ENCODE measurements at regions of chr5 and their contacts with region 1.

Region 1: DNA sequence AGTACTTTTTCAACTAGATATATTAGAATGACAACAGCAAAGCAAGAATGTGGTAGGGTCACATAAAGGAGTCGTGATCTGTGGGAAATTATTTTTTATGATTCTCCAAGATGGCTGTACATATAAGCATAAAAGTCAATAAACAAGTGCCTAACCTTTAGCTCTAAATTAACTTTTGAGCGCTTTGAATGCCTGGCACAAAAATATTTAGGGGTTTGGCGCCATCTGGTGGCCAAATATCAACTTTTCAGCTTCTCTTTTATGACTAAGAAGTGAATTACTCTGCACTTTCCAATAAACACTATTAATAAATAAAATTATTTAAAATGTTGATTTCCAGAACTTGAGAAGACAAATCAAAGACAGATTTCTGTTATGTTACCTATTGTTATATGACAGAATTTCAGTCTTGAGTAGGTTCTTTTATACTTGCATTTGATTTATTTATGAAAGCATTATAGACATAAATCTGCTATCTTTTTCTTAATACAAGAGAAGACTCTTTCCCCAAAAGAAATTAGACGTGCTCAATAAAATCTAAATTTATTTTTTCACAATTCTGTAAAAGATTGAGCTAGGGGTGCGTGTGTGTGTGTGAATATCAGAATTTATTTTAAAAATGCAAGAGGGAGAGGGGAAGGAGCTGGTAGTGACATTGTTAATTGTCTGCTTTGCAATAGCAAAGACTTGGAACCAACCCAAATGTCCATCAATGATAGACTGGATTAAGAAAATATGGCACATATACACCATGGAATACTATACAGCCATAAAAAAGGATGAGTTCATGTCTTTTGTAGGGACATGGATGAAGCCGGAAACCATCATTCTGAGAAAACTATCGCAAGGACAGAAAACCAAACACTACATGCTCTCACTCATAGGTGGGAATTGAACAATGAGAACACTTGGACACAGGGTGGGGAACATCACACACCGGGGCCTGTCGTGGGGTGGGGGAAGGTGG is 36.7 kb upstream of the ARRDC3 start:
- DNase-seq: peak; percentile 48
- ATAC-seq: peak; percentile 47; the same call in 1 of the 2 replicates
- H3K4me3 ChIP-seq: no peak overlapping the region
- H3K27ac ChIP-seq: no peak overlapping the region
- H3K4me1 ChIP-seq: no peaks in the 10 kb centered on the region; a peak in 1 of 4 replicates
- H3K27me3 ChIP-seq: no peaks in the 10 kb centered on the region
- CTCF ChIP-seq: peak; percentile 36 to 72 (median 63); a peak in 4 of 6 replicates
- POLR2A ChIP-seq: no peak
- RAD21 ChIP-seq: peak; percentile 85

Region 2: GRCh38 chr5:90802474-90803317 is 617.2 kb before region 1 on chr5:
- CTCF ChIA-PET with region 1: interaction called, 35 read pairs
- POLR2A ChIA-PET with region 1: no interaction called
- RAD21 ChIA-PET with region 1: interaction called in 1 of 2 experiments, 3 read pairs
- intact Hi-C with region 1: loop called (anchors 5 kb)
- DNase-seq: peak; percentile 27
- ATAC-seq: peak; percentile 90
- H3K4me3 ChIP-seq: no peak overlapping the region
- H3K27ac ChIP-seq: no peak overlapping the region
- H3K4me1 ChIP-seq: no peaks in the 10 kb centered on the region
- H3K27me3 ChIP-seq: no peaks in the 10 kb centered on the region
- CTCF ChIP-seq: peak; percentile 42 to 85 (median 68); a peak in 5 of 6 replicates
- POLR2A ChIP-seq: no peak
- RAD21 ChIP-seq: peak; percentile 54; the same call in 1 of the 2 replicates

Region 3: GRCh38 chr5:90866333-90866732 is 553.5 kb before region 1 on chr5:
- CTCF ChIA-PET with region 1: interaction called, 44 read pairs
- POLR2A ChIA-PET with region 1: no interaction called
- RAD21 ChIA-PET with region 1: interaction called, 4 read pairs
- intact Hi-C with region 1: loop called (anchors 2 kb)
- DNase-seq: peak; percentile 27
- ATAC-seq: peak; percentile 80
- H3K4me3 ChIP-seq: no peak overlapping the region
- H3K27ac ChIP-seq: no peak overlapping the region
- H3K4me1 ChIP-seq: no peaks in the 10 kb centered on the region
- H3K27me3 ChIP-seq: no peaks in the 10 kb centered on the region
- CTCF ChIP-seq: peak; percentile 29 to 66 (median 65); a peak in 4 of 6 replicates
- POLR2A ChIP-seq: no peak
- RAD21 ChIP-seq: peak; percentile 83

Region 4: DNA sequence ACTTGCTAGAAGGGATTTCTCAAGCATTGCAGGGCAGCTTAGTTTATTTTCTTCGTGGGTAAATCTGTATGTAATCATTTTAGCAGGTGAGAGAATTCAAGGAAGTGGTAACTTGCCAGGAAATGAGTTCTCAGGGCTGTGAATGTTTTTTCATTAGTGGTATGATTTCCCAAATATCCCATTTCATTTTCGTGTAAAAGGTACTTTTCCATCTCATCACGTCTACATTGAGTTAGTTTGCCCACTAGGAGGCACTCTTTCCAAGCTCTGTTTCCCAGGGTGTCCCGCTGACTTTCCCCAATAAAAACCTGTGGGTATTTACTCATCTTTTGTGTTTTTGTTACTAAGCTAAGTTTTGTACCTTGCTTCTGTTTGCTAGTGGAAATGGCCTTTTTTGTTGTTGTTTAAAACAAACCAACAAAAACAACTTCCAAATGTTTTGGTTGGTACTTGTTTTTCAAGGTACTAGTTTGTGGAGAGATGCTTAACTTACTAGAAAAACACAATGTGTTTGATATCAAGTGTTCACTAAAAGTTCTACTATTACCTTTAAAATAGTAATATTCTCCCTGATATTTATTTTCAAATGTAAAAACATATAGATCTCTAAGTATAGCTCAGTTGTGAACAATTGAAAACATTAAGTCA is 487.7 kb before region 1 on chr5:
- CTCF ChIA-PET with region 1: interaction called, 14 read pairs
- POLR2A ChIA-PET with region 1: no interaction called
- RAD21 ChIA-PET with region 1: no interaction called
- intact Hi-C with region 1: loop called (anchors 2 kb)
- DNase-seq: peak; percentile 44
- ATAC-seq: peak; percentile 67
- H3K4me3 ChIP-seq: no peak overlapping the region
- H3K27ac ChIP-seq: no peak overlapping the region
- H3K4me1 ChIP-seq: no peaks in the 10 kb centered on the region
- H3K27me3 ChIP-seq: no peaks in the 10 kb centered on the region
- CTCF ChIP-seq: peak; percentile 69 to 77 (median 74); a peak in 5 of 6 replicates
- POLR2A ChIP-seq: no peak
- RAD21 ChIP-seq: peak; percentile 84

Region 5: GRCh38 chr5:91101600-91102379 is 318.1 kb before region 1 on chr5:
- CTCF ChIA-PET with region 1: interaction called, 7 read pairs
- POLR2A ChIA-PET with region 1: no interaction called
- RAD21 ChIA-PET with region 1: no interaction called
- intact Hi-C with region 1: loop called (anchors 1 kb)
- DNase-seq: peak; percentile 76
- ATAC-seq: peak; percentile 100
- H3K4me3 ChIP-seq: no peak overlapping the region
- H3K27ac ChIP-seq: no peak overlapping the region
- H3K4me1 ChIP-seq: peaks cover 0 to 4% of the 10 kb centered on the region in 2 experiments; a peak in 1 of 4 replicates
- H3K27me3 ChIP-seq: no peaks in the 10 kb centered on the region
- CTCF ChIP-seq: peak; percentile 71 to 95 (median 84)
- POLR2A ChIP-seq: no peak
- RAD21 ChIP-seq: peak; percentile 97

Region 6: GRCh38 chr5:91219803-91220371 is 200.0 kb before region 1 on chr5:
- CTCF ChIA-PET with region 1: interaction called, 21 read pairs
- POLR2A ChIA-PET with region 1: no interaction called
- RAD21 ChIA-PET with region 1: interaction called in 1 of 2 experiments, 3 read pairs
- intact Hi-C with region 1: no loop called
- DNase-seq: peak; percentile 26
- ATAC-seq: peak; percentile 82
- H3K4me3 ChIP-seq: no peak overlapping the region
- H3K27ac ChIP-seq: no peak overlapping the region
- H3K4me1 ChIP-seq: no peaks in the 10 kb centered on the region
- H3K27me3 ChIP-seq: no peaks in the 10 kb centered on the region
- CTCF ChIP-seq: peak; percentile 50 to 64 (median 60); a peak in 5 of 6 replicates
- POLR2A ChIP-seq: no peak
- RAD21 ChIP-seq: peak; percentile 49

Region 7: GRCh38 chr5:91225848-91226686 is 193.8 kb before region 1 on chr5:
- CTCF ChIA-PET with region 1: interaction called, 14 read pairs
- POLR2A ChIA-PET with region 1: no interaction called
- RAD21 ChIA-PET with region 1: no interaction called
- intact Hi-C with region 1: loop called (anchors 1 kb)
- DNase-seq: peak; percentile 59
- ATAC-seq: peak; percentile 96
- H3K4me3 ChIP-seq: no peak overlapping the region
- H3K27ac ChIP-seq: no peak overlapping the region
- H3K4me1 ChIP-seq: 0 out of 4 replicates have a peak, but pooled peaks cover 0 to 5% of the 10 kb centered on the region in 2 experiments
- H3K27me3 ChIP-seq: no peaks in the 10 kb centered on the region
- CTCF ChIP-seq: peak; percentile 58 to 98 (median 74)
- POLR2A ChIP-seq: no peak
- RAD21 ChIP-seq: peak; percentile 98

Region 8: GRCh38 chr5:91311697-91312501 is 108.0 kb before region 1 on chr5:
- CTCF ChIA-PET with region 1: no interaction called
- POLR2A ChIA-PET with region 1: no interaction called
- RAD21 ChIA-PET with region 1: no interaction called
- intact Hi-C with region 1: no loop called
- DNase-seq: peak; percentile 91
- ATAC-seq: peak; percentile 76
- H3K4me3 ChIP-seq: peak overlapping the region; percentile 0 to 32; a peak in 3 of 4 replicates
- H3K27ac ChIP-seq: peak overlapping the region; percentile 59
- H3K4me1 ChIP-seq: peaks cover 34 to 63% of the 10 kb centered on the region in 2 experiments
- H3K27me3 ChIP-seq: no peaks in the 10 kb centered on the region
- CTCF ChIP-seq: no peak
- POLR2A ChIP-seq: no peak
- RAD21 ChIP-seq: no peak